Sciatic nerve (tissue), 2 donors: ENCODE measurements at regions of chr11 and their contacts with region 1.

Region 1: DNA sequence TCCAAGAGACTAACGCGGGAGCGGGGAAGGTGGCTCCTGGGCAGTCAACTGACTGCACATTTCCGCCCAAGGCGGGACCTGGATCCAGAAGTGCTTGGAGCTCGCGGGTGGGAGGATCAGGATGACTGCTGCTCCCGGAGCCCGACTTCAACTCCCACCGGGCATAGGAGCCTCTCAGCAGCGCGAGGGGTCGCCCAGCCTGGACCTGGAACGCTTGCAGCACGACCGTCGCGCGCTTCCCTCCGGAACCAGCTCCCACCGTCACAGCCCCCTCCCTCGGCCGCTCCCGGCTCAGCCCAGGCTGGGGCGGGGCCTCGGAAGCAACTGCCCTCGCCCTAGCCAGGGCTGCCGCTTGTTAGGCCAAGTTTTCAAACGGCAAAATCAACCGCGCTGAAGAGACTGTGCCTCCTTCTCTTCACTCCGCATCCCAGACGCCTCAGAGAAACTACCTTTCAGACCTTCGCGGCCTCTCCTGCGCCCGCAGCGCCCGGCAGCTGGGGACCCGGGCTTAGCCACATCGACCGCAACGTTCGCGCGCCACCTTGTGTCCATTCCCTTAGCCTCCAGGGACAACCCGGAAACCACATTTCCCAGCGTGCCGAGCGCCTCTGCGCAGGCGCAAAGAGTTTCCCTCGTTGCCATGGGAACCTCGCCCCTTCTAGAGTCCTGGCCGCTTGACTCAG is 14.0 kb downstream of the SSH3 start:
- DNase-seq: peak; percentile 99
- ATAC-seq: peak; percentile 97

Region 2: GRCh38 chr11:66981976-66982578 is 335.3 kb before region 1 on chr11:
- intact Hi-C with region 1: no loop called
- DNase-seq: peak; percentile 92
- ATAC-seq: peak; percentile 83

Region 3: GRCh38 chr11:67119585-67120391 is 197.6 kb before region 1 on chr11:
- intact Hi-C with region 1: loop called (anchors 10 kb)
- DNase-seq: peak; percentile 64
- ATAC-seq: no peak